B cell (primary cell): ENCODE measurements at regions of chr22 and their contacts with region 1.

Region 1: GRCh38 chr22:38181453-38182247 is at the start of gene PLA2G6:
- DNase-seq: peak; percentile 98
- ATAC-seq: peak; percentile 96
- H3K4me3 ChIP-seq: peak within 1 kb of the TSS; percentile 73 to 88 (median 79)
- H3K4me3 Mint-ChIP-seq: peak within 1 kb of the TSS; percentile 89
- H3K27ac ChIP-seq: peak within 1 kb of the TSS; percentile 64 to 67
- H3K27ac Mint-ChIP-seq: peak within 1 kb of the TSS; percentile 93
- H3K4me1 ChIP-seq: peaks cover 23 to 28% of the 10 kb centered on the region in 2 donors
- H3K4me1 Mint-ChIP-seq: peaks cover 35% of the 10 kb centered on the region
- H3K27me3 ChIP-seq: no peaks in the 10 kb centered on the region
- H3K27me3 Mint-ChIP-seq: peaks cover 7% of the 10 kb centered on the region
- CTCF ChIP-seq: no peak
- total RNA-seq, gene PLA2G6: 125 and 128 TPM in 2 replicates

Region 2: GRCh38 chr22:38201710-38202436 is 20.2 kb after region 1 on chr22 and contains the start of gene MAFF:
- CTCF ChIA-PET with region 1: interaction called, 5 read pairs
- POLR2A ChIA-PET with region 1: interaction called, 20 read pairs
- intact Hi-C with region 1: loop called (anchors 1 kb)
- DNase-seq: peak; percentile 87
- ATAC-seq: peak; percentile 77
- H3K4me3 ChIP-seq: peak within 1 kb of the TSS; percentile 49 to 78 (median 67)
- H3K4me3 Mint-ChIP-seq: peak within 1 kb of the TSS; percentile 90
- H3K27ac ChIP-seq: peak within 1 kb of the TSS; percentile 38 to 66
- H3K27ac Mint-ChIP-seq: peak within 1 kb of the TSS; percentile 83
- H3K4me1 ChIP-seq: peaks cover 25 to 33% of the 10 kb centered on the region in 2 donors
- H3K4me1 Mint-ChIP-seq: peaks cover 44% of the 10 kb centered on the region
- H3K27me3 ChIP-seq: no peaks in the 10 kb centered on the region
- H3K27me3 Mint-ChIP-seq: no peaks in the 10 kb centered on the region
- CTCF ChIP-seq: no peak
- total RNA-seq, gene MAFF: 4.8 and 5.3 TPM in 2 replicates

Region 3: GRCh38 chr22:38262051-38262795 is 80.6 kb after region 1 on chr22:
- CTCF ChIA-PET with region 1: no interaction called
- POLR2A ChIA-PET with region 1: no interaction called
- intact Hi-C with region 1: loop called (anchors 1 kb)
- DNase-seq: peak; percentile 53
- ATAC-seq: peak; percentile 24
- H3K4me3 ChIP-seq: no peak overlapping the region
- H3K4me3 Mint-ChIP-seq: no peak overlapping the region
- H3K27ac ChIP-seq: no peak overlapping the region
- H3K27ac Mint-ChIP-seq: peak overlapping the region; percentile 33
- H3K4me1 ChIP-seq: peaks cover 3 to 26% of the 10 kb centered on the region in 2 donors
- H3K4me1 Mint-ChIP-seq: peaks cover 37% of the 10 kb centered on the region
- H3K27me3 ChIP-seq: no peaks in the 10 kb centered on the region
- H3K27me3 Mint-ChIP-seq: no peaks in the 10 kb centered on the region
- CTCF ChIP-seq: peak; percentile 30

Region 4: DNA sequence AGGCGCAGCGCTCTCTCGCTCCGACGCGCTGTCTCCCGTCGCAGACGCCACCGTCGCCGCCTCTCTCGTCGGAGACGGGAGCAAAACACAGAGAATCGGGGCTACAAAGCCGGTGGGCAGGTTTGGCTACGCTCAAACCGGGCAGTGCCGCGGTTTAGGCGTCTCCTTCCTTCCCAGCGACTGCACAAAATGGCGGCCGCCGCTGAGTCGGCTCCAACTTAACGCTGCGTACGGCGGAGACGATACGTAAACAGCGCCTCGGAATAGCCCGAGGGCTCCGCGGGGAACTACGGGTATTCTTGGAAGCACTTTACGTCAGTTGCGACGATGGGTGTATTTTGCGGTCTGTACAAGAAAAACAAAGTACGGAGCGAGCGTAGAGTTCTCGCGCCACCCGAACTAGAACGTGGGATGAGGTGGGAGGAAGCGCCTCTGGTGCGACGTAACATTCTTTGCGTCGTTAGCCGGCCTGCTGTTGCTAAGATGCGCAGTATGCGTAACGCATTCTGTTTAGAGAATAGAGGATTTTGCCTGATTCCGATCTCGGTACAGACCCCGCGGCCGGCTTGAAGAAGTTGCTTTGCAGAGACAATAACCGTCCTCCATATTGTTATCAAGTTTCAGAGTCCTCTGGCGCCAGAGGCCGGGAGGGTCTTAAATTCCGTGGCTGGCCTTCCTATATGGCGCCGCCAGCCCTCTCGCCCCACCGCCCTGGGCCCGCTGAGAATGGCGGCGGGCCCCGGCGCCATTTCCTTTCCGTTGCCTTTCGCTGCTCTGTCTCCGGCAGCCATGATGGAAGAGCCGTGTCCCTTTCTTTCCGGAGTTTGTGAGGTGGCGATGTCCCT is 324.7 kb after region 1 on chr22 and contains the start of gene DDX17:
- CTCF ChIA-PET with region 1: no interaction called
- POLR2A ChIA-PET with region 1: no interaction called
- intact Hi-C with region 1: loop called (anchors 2 kb)
- DNase-seq: peak; percentile 99
- ATAC-seq: peak; percentile 87
- H3K4me3 ChIP-seq: peak within 1 kb of the TSS; percentile 78 to 99 (median 93)
- H3K4me3 Mint-ChIP-seq: peak within 1 kb of the TSS; percentile 99
- H3K27ac ChIP-seq: peak within 1 kb of the TSS; percentile 98
- H3K27ac Mint-ChIP-seq: peak within 1 kb of the TSS; percentile 100
- H3K4me1 ChIP-seq: peaks cover 39 to 40% of the 10 kb centered on the region in 2 donors
- H3K4me1 Mint-ChIP-seq: peaks cover 51% of the 10 kb centered on the region
- H3K27me3 ChIP-seq: no peaks in the 10 kb centered on the region
- H3K27me3 Mint-ChIP-seq: no peaks in the 10 kb centered on the region
- CTCF ChIP-seq: no peak
- total RNA-seq, gene DDX17: 936 and 967 TPM in 2 replicates